ENCODE measurements at regions of chr2 and their contacts with region 1.

Region 1: GRCh38 chr2:219597552-219598307 is at the start of gene STK11IP:
- DNase-seq: peak; percentile 99
- H3K4me3 ChIP-seq: peak within 1 kb of the TSS; percentile 59 to 80 (median 68)
- H3K27ac ChIP-seq: peak within 1 kb of the TSS; percentile 88 to 91 (median 90)
- H3K4me1 ChIP-seq: peaks cover 17 to 29% (median 18%) of the 10 kb centered on the region in 4 donors
- H3K27me3 ChIP-seq: no peaks in the 10 kb centered on the region
- CTCF ChIP-seq: no peak
- EP300 ChIP-seq: no peak
- POLR2A ChIP-seq: peak; percentile 53
- total RNA-seq, gene STK11IP: 8.9 to 24.2 (median 14.3) TPM

Region 2: GRCh38 chr2:218979846-218980734 is 617.6 kb before region 1 on chr2:
- intact Hi-C with region 1: no loop called
- DNase-seq: no peak
- H3K4me3 ChIP-seq: peak overlapping the region; percentile 18 to 45 (median 26)
- H3K27ac ChIP-seq: no peak overlapping the region
- H3K4me1 ChIP-seq: peaks cover 37 to 50% (median 48%) of the 10 kb centered on the region in 4 donors
- H3K27me3 ChIP-seq: peaks cover 0 to 98% (median 59%) of the 10 kb centered on the region in 4 donors
- CTCF ChIP-seq: peak; percentile 74 to 90 (median 89)
- EP300 ChIP-seq: no peak
- POLR2A ChIP-seq: no peak

Region 3: DNA sequence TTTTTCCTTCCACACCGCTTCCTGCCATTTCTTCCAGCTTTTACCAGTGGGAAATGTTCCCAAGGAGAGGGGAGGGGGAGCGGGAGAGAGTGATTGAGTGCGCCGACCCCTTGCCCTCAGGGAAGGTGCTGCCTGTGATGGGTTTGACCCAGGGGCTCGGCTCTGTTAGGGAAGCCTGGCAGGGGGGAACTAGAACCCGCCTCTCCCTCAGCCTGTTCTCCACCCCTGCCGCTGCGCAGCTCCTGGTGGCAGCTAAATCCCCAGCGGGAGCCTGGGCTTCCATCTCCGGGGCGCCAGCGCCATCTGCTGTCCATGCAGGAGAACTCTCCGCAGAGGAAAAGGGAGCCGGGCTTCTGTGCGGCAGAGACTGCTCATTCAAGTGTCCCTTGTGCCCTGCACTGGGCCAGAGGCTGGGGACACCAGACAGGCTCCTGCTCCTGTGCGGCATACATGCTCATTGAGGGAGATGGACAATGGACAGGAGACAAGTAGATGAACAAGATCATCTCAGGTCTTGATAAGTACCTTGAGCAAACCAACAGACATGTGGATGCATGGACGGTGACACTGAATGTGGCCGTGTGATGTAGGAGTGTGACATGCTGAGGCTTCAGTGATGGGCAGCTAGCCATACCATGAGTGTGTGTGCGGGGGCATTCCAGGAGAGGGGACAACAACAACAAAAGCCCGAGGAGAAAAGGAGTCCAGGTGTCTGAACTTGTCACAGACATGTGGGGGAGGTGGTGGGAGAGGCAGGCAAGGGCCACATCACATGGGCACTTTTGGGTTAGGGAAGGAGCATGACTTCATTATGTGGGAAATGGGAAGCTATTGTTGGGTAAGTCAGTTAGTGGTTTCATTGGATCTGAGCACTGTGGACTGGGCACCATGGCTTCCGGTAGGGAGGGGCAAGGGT is 67.4 kb before region 1 on chr2:
- intact Hi-C with region 1: no loop called
- DNase-seq: no peak
- H3K4me3 ChIP-seq: peak overlapping the region; percentile 11 to 32 (median 29)
- H3K27ac ChIP-seq: peak overlapping the region in 1 of 4 donors; percentile 45
- H3K4me1 ChIP-seq: peaks cover 9 to 19% (median 15%) of the 10 kb centered on the region in 4 donors
- H3K27me3 ChIP-seq: peaks cover 0 to 37% (median 0%) of the 10 kb centered on the region in 4 donors
- CTCF ChIP-seq: peak; percentile 96 to 99 (median 97)
- EP300 ChIP-seq: no peak
- POLR2A ChIP-seq: no peak

Region 4: DNA sequence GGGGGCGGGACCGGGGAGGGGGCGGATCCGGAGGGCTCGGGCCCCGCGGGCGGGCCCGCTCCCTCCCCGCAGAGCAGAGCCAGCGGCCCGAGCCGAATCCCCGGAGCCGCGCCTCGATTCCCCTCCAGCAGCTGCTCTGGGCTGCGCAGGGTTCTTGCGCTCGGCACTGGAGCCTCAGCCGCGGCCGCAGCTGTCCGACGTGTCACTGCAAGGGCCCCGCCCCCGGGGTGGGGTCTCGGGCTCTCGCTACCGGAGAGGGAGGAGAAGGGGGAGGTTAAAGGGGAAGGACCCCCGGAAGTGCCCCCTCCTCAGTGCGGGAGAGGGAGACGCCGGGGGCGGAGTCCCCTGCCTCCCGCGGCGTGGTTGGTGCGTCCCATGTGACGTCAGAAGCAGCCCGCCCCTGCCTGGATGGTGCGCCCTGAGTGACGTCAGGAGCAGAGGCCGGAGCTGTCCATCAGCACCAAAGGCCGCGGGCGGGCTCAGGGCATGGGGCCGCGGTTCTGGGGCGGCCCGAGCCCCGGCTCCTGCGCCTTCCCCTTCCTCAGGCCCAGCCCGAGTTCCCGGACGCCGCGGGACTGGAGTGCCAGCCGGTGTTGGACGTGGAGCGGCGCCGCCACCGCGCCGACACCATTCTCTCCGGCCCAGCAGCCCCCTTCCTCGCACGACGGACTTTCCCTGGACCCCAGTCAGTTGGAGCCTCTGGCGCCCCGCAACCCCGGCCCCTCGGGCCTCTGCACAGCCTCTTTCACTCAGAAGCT is 54.0 kb before region 1 on chr2 and contains the starts of genes CHPF and TMEM198:
- intact Hi-C with region 1: loop called (anchors 5 kb)
- DNase-seq: peak; percentile 99
- H3K4me3 ChIP-seq: peak within 1 kb of the TSS; percentile 67 to 83 (median 77)
- H3K27ac ChIP-seq: peak within 1 kb of the TSS; percentile 93 to 95 (median 94)
- H3K4me1 ChIP-seq: peaks cover 26 to 46% (median 42%) of the 10 kb centered on the region in 4 donors
- H3K27me3 ChIP-seq: peaks cover 0 to 4% (median 0%) of the 10 kb centered on the region in 4 donors
- CTCF ChIP-seq: no peak
- EP300 ChIP-seq: no peak
- POLR2A ChIP-seq: no peak
- total RNA-seq, gene CHPF: 44.4 to 67.8 (median 58.4) TPM
- total RNA-seq, gene TMEM198: 3.7 to 4.7 (median 4.2) TPM

Region 5: DNA sequence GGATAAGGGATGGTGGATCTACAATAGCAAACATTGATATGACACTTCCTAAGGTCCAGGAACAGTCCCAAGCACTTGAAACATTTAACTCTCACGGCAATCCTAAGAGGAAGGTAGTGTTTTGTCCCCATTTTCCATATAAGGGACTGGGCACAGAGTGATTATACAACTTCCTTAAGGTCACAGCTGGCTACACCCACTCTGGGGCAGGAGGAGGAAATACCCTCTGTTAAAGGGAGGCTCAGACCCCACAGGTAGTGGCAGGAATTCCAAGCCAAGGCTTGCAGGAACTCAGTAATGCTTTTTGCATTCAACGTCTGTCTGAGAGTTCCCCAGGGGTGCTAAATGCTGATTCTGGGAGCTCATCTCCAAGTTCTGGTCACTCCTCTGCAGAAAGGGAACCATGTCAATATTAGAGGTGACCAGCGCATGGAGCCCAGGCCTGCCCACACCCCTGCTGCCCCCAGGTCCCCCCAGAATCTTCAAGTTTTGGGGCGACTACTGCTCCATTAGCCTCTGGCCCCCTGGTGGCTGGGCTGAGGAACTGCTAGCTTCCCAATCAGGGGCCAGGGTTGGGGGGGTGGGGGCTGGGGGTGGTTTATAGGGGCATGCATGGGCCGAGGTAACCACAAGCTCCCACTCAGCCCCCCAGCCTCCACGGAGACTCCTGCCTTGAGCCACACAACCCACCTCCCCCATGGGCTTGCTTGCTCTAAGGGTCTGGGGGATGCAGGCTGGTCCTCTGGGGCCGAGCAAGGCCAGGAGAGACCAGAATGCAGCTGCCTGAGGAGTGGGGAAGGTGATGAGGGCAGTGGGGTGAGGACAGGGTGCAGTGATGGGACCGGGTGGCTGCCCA is 37.5 kb before region 1 on chr2:
- intact Hi-C with region 1: loop called (anchors 5 kb)
- DNase-seq: no peak
- H3K4me3 ChIP-seq: no peak overlapping the region
- H3K27ac ChIP-seq: no peak overlapping the region
- H3K4me1 ChIP-seq: peaks cover 3 to 18% (median 16%) of the 10 kb centered on the region in 4 donors
- H3K27me3 ChIP-seq: no peaks in the 10 kb centered on the region
- CTCF ChIP-seq: peak; percentile 40 to 91 (median 68)
- EP300 ChIP-seq: no peak
- POLR2A ChIP-seq: no peak

Region 6: GRCh38 chr2:219571311-219572236 is 26.2 kb before region 1 on chr2 and contains the start of gene OBSL1:
- intact Hi-C with region 1: loop called (anchors 2 kb)
- DNase-seq: no peak
- H3K4me3 ChIP-seq: peak within 1 kb of the TSS; percentile 73 to 87 (median 82)
- H3K27ac ChIP-seq: peak within 1 kb of the TSS; percentile 86 to 91 (median 90)
- H3K4me1 ChIP-seq: peaks cover 15 to 20% (median 16%) of the 10 kb centered on the region in 4 donors
- H3K27me3 ChIP-seq: peaks cover 0 to 20% (median 0%) of the 10 kb centered on the region in 4 donors
- CTCF ChIP-seq: no peak
- EP300 ChIP-seq: no peak
- POLR2A ChIP-seq: no peak
- total RNA-seq, gene OBSL1: 51.9 to 123 (median 99.2) TPM

Region 7: DNA sequence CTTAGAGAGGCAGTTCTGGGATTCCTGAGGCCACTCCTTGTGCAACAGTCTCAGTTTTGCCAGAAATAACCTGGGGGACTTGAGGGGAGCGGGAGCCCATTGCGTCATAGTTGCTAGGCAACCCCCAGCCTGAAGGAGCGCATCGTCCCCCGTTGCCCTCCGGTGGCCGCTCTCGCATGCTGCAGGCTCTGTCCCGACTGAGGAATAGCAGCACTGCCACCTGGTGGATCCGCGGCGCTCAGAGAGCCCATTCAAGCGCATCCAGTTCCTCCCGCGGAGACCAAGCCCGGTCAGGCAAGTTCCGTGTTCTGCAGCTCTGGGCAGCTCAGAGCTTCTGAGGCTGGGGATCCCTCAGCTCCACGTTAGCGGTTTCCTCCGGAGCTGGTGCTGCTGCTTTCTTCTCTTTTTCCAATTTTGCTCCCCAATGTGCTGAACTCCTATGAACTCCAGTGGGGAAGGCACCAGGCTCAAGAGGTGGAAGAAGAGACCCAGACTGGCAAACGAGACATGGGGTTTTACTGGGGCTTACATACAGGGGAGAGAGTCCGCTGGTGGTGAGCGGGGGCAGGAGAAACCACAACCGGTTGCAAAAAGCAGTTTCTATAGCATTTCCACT is 44.8 kb after region 1 on chr2:
- intact Hi-C with region 1: no loop called
- DNase-seq: peak; percentile 99
- H3K4me3 ChIP-seq: no peak overlapping the region
- H3K27ac ChIP-seq: peak overlapping the region; percentile 61 to 78 (median 64)
- H3K4me1 ChIP-seq: peaks cover 27 to 39% (median 32%) of the 10 kb centered on the region in 4 donors
- H3K27me3 ChIP-seq: no peaks in the 10 kb centered on the region
- CTCF ChIP-seq: peak; percentile 96 to 100 (median 99)
- EP300 ChIP-seq: no peak
- POLR2A ChIP-seq: no peak